HAP-1 (cell line): ENCODE measurements at regions of chr1 and their contacts with region 1.

Region 1: GRCh38 chr1:178310685-178311105 is 186.1 kb downstream of the CLEC20A start:
- DNase-seq: peak; percentile 8 to 84
- H3K4me3 ChIP-seq: no peak overlapping the region
- H3K4me1 ChIP-seq: no peaks in the 10 kb centered on the region; the same call in 1 of the 2 replicates
- H3K27me3 ChIP-seq: no peaks in the 10 kb centered on the region

Region 2: DNA sequence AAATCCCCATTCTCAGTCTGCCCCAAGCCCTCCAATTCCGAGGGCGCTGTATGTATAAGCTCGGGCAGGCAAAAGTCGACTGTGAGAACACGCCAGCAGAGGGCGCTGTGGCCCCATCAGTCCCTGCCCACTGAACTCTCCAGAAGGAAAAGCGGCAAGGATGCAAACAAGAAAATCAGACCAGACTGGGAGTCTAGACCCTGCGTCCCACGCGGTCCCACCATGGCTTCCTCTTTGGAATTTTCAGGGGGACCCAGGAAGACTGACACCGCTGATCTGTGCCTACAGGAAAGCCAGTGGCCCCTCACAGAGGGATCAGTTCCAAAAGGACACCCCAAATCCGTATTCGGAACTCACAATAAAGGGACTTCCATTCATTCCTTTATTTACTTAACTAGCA is 221.7 kb after region 1 on chr1:
- in situ Hi-C with region 1: loop called (anchors 5 kb)
- DNase-seq: peak; percentile 68 to 90
- H3K4me3 ChIP-seq: no peak overlapping the region
- H3K4me1 ChIP-seq: peaks cover 6% of the 10 kb centered on the region
- H3K27me3 ChIP-seq: no peaks in the 10 kb centered on the region

Region 3: GRCh38 chr1:178713259-178713658 is 402.6 kb after region 1 on chr1:
- in situ Hi-C with region 1: no loop called
- DNase-seq: no peak
- H3K4me3 ChIP-seq: no peak overlapping the region
- H3K4me1 ChIP-seq: peaks cover 6% of the 10 kb centered on the region; the same call in 1 of the 2 replicates
- H3K27me3 ChIP-seq: peaks cover 32% of the 10 kb centered on the region

Region 4: GRCh38 chr1:178768423-178768822 is 457.7 kb after region 1 on chr1:
- in situ Hi-C with region 1: loop called (anchors 25 kb)
- DNase-seq: peak; percentile 29 to 43
- H3K4me3 ChIP-seq: no peak overlapping the region
- H3K4me1 ChIP-seq: no peaks in the 10 kb centered on the region
- H3K27me3 ChIP-seq: no peaks in the 10 kb centered on the region

Region 5: DNA sequence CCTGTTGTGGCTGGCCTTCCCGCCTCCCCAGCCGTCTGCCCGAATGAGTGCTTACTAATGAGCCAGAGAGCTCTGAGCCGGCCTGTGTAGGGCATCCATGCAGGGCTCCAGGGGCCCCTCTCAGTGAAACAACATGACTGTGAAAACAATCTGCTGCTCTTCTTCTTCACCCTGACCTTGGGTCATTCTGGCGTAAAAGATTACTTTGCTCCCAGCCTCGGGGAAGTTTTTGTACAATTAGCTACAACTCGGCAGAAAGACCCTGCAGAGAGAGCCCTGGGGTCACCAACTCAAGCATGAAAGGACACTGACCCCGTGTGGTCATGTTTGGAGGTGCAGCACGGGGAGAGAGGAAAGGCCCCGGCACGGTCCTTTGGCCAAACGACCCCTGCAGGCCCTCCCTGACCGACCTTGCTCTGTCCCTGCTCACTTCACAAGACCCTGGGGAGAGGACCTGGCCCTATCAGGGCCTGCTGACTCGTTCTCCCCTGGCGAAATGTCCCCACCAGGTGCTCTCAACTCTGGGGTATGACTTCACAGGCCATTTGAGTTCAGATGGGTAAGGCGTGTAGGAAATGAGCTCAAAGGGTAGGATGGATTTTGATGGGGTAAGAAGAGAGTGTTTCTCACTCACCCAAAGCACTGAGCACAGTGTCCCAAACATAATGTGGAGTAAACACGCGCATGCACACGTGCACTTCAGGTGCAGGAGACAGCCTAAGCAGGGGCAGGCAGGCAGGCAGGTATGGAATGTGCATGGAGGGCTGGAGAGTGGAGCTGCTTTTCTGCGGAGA is 692.1 kb after region 1 on chr1:
- in situ Hi-C with region 1: loop called (anchors 10 kb)
- DNase-seq: peak; percentile 82 to 93
- H3K4me3 ChIP-seq: no peak overlapping the region
- H3K4me1 ChIP-seq: peaks cover 5% of the 10 kb centered on the region
- H3K27me3 ChIP-seq: no peaks in the 10 kb centered on the region